Activated T-helper 2 cell treated with anti-CD3 and anti-CD28 coated beads, Interferon-gamma antibody, Interleukin-2, Interleukin-4, amounts not matched to agents 10 μg/mL and 5 μg/mL and 100 μg/mL, durations not matched to agents 14 hours and 24 hours and 36 hours (primary cell): ENCODE measurements at regions of chr16 and their contacts with region 1.

Region 1: GRCh38 chr16:78705694-78706093 is 606.2 kb downstream of the WWOX start:
- DNase-seq: no peak
- H3K4me3 Mint-ChIP-seq: no peak overlapping the region
- H3K27ac Mint-ChIP-seq: no peak overlapping the region
- H3K4me1 Mint-ChIP-seq: peaks cover 6% of the 10 kb centered on the region
- H3K27me3 Mint-ChIP-seq: peaks cover 4% of the 10 kb centered on the region

Region 2: DNA sequence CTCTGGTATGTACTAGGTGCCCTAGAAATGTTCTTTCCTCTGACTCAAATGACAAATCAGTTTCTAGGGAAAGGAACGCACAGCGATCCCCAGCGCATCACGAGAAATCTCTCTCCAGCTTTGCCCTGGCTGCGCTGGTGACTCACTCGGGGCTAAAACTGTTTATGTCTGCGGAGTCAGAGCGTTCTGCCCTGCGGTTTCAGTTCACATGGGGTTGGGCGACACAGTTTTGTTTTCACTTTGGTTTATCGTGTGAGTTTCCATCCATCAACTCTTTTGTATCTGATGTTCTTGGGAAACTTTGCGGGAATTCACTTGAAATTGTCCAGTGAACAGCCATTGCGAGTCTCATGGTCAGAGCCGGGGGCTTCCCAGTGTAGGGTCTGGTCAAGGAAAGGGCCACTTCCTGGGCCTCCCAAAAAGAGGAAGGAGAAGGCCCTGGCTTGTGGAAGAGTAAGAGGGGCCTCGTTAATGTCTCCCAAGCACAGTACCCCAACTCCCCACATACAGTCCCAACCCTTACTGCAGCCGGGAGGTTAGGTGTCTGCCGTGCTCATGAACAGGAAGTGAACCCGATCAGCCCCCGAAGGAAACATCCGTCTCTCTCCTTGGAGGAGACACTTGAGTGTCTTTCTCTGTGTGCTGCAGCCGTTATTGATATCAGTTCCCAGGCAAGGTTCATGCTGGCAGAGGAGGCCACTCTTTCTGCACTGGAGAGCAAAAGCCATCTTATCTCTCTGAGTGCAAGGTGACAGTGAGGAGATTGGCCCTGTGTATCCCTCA is 37.0 kb after region 1 on chr16:
- intact Hi-C with region 1: loop called (anchors 1 kb)
- DNase-seq: peak; percentile 68
- H3K4me3 Mint-ChIP-seq: peak overlapping the region; percentile 72
- H3K27ac Mint-ChIP-seq: peak overlapping the region; percentile 86
- H3K4me1 Mint-ChIP-seq: peaks cover 17% of the 10 kb centered on the region
- H3K27me3 Mint-ChIP-seq: peaks cover 8% of the 10 kb centered on the region

Region 3: GRCh38 chr16:78770353-78771091 is 64.8 kb after region 1 on chr16:
- intact Hi-C with region 1: loop called (anchors 1 kb)
- DNase-seq: peak; percentile 62
- H3K4me3 Mint-ChIP-seq: no peak overlapping the region
- H3K27ac Mint-ChIP-seq: peak overlapping the region; percentile 2
- H3K4me1 Mint-ChIP-seq: peaks cover 35% of the 10 kb centered on the region
- H3K27me3 Mint-ChIP-seq: peaks cover 7% of the 10 kb centered on the region

Region 4: GRCh38 chr16:78892951-78893733 is 187.4 kb after region 1 on chr16:
- intact Hi-C with region 1: loop called (anchors 10 kb)
- DNase-seq: no peak
- H3K4me3 Mint-ChIP-seq: no peak overlapping the region
- H3K27ac Mint-ChIP-seq: peak overlapping the region; percentile 34
- H3K4me1 Mint-ChIP-seq: peaks cover 27% of the 10 kb centered on the region
- H3K27me3 Mint-ChIP-seq: no peaks in the 10 kb centered on the region

Region 5: GRCh38 chr16:80466024-80466987 is 1760.6 kb after region 1 on chr16:
- intact Hi-C with region 1: loop called (anchors 5 kb)
- DNase-seq: peak; percentile 46
- H3K4me3 Mint-ChIP-seq: no peak overlapping the region
- H3K27ac Mint-ChIP-seq: no peak overlapping the region
- H3K4me1 Mint-ChIP-seq: no peaks in the 10 kb centered on the region
- H3K27me3 Mint-ChIP-seq: peaks cover 11% of the 10 kb centered on the region